Heart left ventricle (tissue), 16 donors: ENCODE measurements at regions of chr19 and their contacts with region 1.

Region 1: GRCh38 chr19:20051841-20052768 is 12.8 kb upstream of the ZNF682 start:
- DNase-seq: peak; percentile 94 to 98 (median 95)
- ATAC-seq: peak; percentile 99 to 100 (median 100)
- H3K4me3 ChIP-seq: peak overlapping the region; percentile 48 to 99 (median 74)
- H3K27ac ChIP-seq: peak overlapping the region; percentile 57 to 85 (median 73)
- H3K4me1 ChIP-seq: peaks cover 0 to 10% (median 2%) of the 10 kb centered on the region in 12 donors
- H3K27me3 ChIP-seq: no peaks in the 10 kb centered on the region
- CTCF ChIP-seq: peak in 3 of 12 donors; percentile 5 to 35 (median 14)
- POLR2A ChIP-seq: peak in 1 of 2 donors; percentile 59

Region 2: GRCh38 chr19:19966862-19967261 is 85.2 kb before region 1 on chr19:
- intact Hi-C with region 1: no loop called
- DNase-seq: no peak
- ATAC-seq: no peak
- H3K4me3 ChIP-seq: no peak overlapping the region
- H3K27ac ChIP-seq: no peak overlapping the region
- H3K4me1 ChIP-seq: no peaks in the 10 kb centered on the region
- H3K27me3 ChIP-seq: no peaks in the 10 kb centered on the region
- CTCF ChIP-seq: no peak
- POLR2A ChIP-seq: no peak

Region 3: DNA sequence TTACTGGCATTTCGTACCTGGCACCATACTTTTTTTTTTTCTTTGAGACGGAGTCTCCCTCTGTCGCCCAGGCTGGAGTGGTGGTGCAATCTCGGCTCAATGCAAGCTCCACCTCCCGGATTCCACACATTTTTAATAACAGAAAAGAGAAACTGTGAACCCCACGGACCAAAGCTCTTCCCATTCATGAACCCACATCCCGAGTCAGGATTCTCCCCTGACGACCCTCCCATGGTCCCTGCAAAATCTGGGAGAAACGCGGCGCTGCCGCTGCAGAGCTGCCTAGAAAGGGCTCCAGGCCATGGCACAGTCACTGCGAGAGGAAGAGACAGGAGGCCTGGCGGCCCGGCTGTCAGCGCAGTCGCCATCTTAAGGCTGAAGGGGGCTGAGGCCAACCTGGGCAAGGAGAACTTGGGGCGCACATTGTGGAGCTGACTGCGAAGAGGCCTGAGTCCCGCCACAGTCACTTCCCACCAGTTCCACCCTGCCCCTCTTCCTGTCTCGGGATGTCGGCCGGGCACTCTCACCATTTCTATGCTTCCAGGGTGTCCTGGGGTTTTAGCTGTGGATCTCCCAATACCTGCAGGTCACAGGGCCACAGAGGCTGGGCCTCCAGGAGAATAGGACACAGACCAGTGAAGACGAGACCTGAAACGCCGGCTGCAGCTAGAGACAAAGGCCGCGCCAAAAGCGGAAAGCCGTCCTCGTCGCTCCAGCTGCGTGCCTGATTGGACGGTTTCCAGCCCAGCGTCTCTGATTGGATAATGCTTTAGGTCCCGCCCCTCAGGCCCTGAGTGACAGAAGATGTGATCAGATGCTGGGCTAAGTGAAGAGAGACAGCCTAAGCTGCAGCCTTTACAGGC is 185.9 kb after region 1 on chr19:
- intact Hi-C with region 1: loop called in 1 of 10 experiments (anchors 10 kb)
- DNase-seq: peak; percentile 90 to 95 (median 93)
- ATAC-seq: peak; percentile 92 to 97 (median 96)
- H3K4me3 ChIP-seq: peak overlapping the region; percentile 43 to 80 (median 64)
- H3K27ac ChIP-seq: peak overlapping the region in 10 of 12 donors; percentile 1 to 65 (median 49)
- H3K4me1 ChIP-seq: peaks cover 0 to 17% (median 2%) of the 10 kb centered on the region in 12 donors
- H3K27me3 ChIP-seq: no peaks in the 10 kb centered on the region
- CTCF ChIP-seq: peak in 2 of 12 donors; percentile 7 to 17
- POLR2A ChIP-seq: no peak